PC-9 (cell line): ENCODE measurements at regions of chr2 and their contacts with region 1.

Region 1: DNA sequence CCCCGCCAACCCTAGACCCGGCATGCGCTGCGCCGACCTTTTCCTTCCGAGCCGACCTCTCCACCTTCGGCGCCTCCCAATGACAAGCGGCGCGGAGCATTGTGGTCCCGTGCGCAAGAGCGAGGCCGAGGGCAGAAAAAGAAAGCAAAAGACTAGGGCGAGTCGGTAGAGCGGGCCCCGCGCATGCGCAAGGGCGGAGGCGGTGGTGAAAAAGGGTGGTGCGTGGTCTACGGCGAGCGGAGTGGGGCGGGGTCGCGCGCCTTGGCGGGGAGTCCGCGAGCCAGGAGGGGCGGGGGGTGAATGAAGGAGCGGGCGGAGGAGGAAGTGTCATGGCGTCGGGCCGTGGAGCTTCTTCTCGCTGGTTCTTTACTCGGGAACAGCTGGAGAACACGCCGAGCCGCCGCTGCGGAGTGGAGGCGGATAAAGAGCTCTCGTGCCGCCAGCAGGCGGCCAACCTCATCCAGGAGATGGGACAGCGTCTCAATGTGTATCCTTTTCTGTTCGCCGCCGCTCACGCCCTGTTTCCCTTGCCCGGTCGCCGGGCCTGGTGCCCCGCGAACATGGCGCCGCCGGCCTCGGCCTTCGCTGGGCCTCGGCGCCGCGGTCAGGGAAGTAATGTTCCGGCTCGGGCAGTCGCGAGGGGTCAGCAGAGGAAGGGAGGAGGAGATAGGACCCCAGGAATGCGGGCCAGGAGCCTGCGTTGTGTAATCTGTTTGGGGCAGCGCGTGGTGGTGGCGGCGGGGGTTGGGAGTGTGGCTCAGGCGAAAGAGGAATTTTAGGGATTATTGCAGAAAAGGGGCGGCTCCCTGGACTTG is at the start of gene CCNT2:
- DNase-seq: peak; percentile 95 to 99
- H3K4me3 ChIP-seq: peak within 1 kb of the TSS; percentile 91
- H3K27ac ChIP-seq: peak within 1 kb of the TSS; percentile 94
- H3K4me1 ChIP-seq: peaks cover 27% of the 10 kb centered on the region
- H3K27me3 ChIP-seq: no peaks in the 10 kb centered on the region
- CTCF ChIP-seq: no peak
- total RNA-seq, gene CCNT2: 19.1 and 26.2 TPM in 2 replicates

Region 2: DNA sequence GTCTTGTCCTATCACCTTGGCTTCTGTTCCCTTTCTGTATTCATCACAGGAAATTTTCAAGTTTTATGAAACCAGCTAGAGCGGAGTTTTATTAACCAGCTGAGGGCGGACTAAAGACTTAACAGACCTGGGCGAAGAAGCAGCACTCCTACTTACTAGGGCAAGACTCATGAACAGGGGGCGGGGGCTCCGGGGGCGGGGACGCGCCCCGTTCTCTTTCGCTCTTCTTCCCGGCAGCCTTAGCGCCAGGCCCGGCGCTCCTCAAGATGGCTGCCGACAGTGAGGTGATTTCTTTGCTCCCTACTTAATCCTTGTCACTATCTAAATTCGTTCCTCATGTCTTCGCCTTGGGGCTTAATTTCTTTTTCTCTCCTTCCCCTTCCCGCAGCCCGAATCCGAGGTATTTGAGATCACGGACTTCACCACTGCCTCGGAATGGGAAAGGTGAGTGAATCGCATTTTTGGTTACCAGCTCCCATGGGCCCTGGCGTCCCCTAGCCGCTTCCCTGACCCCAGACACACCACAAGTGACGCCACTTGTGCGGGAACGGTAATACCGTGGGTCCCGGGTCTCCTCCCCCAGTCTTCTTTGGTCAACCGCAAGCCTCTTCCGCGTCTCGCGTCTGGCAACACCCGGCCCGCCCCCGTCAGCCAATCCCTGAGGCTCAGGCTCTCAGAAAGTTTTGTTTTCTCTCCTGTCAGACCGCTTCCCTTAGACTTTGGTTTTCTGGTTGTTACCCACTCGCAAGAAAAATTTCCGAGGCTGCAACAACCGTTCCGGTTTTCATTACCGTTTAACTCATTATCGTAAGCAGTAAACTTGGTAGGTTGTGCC is 133.5 kb after region 1 on chr2 and contains the start of gene RAB3GAP1:
- CTCF ChIA-PET with region 1: no interaction called
- POLR2A ChIA-PET with region 1: no interaction called
- intact Hi-C with region 1: loop called (anchors 10 kb)
- DNase-seq: peak; percentile 49 to 65
- H3K4me3 ChIP-seq: peak within 1 kb of the TSS; percentile 87
- H3K27ac ChIP-seq: peak within 1 kb of the TSS; percentile 82
- H3K4me1 ChIP-seq: peaks cover 26% of the 10 kb centered on the region
- H3K27me3 ChIP-seq: no peaks in the 10 kb centered on the region
- CTCF ChIP-seq: no peak
- total RNA-seq, gene RAB3GAP1: 29.5 and 36.8 TPM in 2 replicates